MCF 10A (cell line): ENCODE measurements at regions of chr1 and their contacts with region 1.

Region 1: GRCh38 chr1:114780344-114781226 is at the start of gene SIKE1:
- DNase-seq: peak; percentile 94
- H3K4me3 Mint-ChIP-seq: peak within 1 kb of the TSS; percentile 100
- H3K27ac Mint-ChIP-seq: peak within 1 kb of the TSS; percentile 97
- H3K4me1 Mint-ChIP-seq: no peaks in the 10 kb centered on the region
- H3K27me3 Mint-ChIP-seq: peaks cover 14% of the 10 kb centered on the region
- CTCF ChIP-seq: no peak
- total RNA-seq, gene SIKE1: 66.2 and 74.1 TPM in 2 replicates

Region 2: GRCh38 chr1:114745291-114745690 is 35.3 kb before region 1 on chr1:
- CTCF ChIA-PET with region 1: no interaction called
- POLR2A ChIA-PET with region 1: no interaction called
- intact Hi-C with region 1: no loop called
- DNase-seq: no peak
- H3K4me3 Mint-ChIP-seq: no peak overlapping the region
- H3K27ac Mint-ChIP-seq: no peak overlapping the region
- H3K4me1 Mint-ChIP-seq: peaks cover 40% of the 10 kb centered on the region
- H3K27me3 Mint-ChIP-seq: no peaks in the 10 kb centered on the region
- CTCF ChIP-seq: no peak

Region 3: DNA sequence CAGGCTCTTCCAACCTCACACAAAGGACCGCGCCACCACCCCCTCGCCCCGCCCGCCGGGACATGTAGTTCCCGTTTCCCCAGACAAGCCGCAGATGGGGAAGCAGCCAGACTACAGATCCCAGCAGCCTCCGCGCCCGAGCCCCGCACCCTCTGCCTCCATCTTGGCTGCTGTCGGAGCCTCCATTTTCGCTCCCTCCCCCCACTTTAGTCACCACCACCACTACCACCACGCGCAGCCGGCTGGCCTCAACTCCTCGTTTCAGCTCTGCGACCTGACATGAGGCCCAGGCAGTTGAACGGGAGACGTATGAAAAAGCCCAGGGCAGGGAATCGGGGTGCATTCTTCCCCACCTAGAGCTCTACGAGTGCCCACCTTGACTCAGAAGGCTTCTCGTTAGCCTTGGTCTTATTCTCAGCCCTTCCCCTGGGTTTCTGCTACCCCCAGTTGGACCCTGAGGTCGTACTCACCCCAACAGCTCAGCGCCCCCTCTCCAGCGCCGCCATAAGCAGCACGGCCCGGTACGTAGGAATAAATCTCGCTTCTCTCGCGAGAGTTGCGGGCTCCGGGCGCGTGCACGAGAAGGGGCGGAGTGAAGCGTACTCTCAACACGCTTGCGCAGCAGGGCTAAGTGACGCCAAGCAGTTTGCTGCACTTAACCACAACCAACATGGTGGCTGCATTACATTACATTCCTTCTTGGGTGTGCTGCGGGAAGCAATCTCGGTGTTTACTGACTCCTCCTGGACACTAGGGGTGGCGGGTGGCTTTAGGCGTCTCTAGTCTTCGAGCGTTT is 22.9 kb before region 1 on chr1 and contains the start of gene CSDE1:
- CTCF ChIA-PET with region 1: no interaction called
- POLR2A ChIA-PET with region 1: interaction called, 37 read pairs
- intact Hi-C with region 1: no loop called
- DNase-seq: peak; percentile 98
- H3K4me3 Mint-ChIP-seq: peak within 1 kb of the TSS; percentile 97
- H3K27ac Mint-ChIP-seq: peak within 1 kb of the TSS; percentile 100
- H3K4me1 Mint-ChIP-seq: peaks cover 29% of the 10 kb centered on the region
- H3K27me3 Mint-ChIP-seq: no peaks in the 10 kb centered on the region
- CTCF ChIP-seq: no peak
- total RNA-seq, gene CSDE1: 535 and 580 TPM in 2 replicates

Region 4: GRCh38 chr1:114764689-114765088 is 15.9 kb before region 1 on chr1:
- CTCF ChIA-PET with region 1: no interaction called
- POLR2A ChIA-PET with region 1: interaction called, 21 read pairs
- intact Hi-C with region 1: no loop called
- DNase-seq: no peak
- H3K4me3 Mint-ChIP-seq: no peak overlapping the region
- H3K27ac Mint-ChIP-seq: no peak overlapping the region
- H3K4me1 Mint-ChIP-seq: no peaks in the 10 kb centered on the region
- H3K27me3 Mint-ChIP-seq: no peaks in the 10 kb centered on the region
- CTCF ChIP-seq: peak; percentile 16